SK-N-SH (cell line): ENCODE measurements at regions of chr9 and their contacts with region 1.

Region 1: DNA sequence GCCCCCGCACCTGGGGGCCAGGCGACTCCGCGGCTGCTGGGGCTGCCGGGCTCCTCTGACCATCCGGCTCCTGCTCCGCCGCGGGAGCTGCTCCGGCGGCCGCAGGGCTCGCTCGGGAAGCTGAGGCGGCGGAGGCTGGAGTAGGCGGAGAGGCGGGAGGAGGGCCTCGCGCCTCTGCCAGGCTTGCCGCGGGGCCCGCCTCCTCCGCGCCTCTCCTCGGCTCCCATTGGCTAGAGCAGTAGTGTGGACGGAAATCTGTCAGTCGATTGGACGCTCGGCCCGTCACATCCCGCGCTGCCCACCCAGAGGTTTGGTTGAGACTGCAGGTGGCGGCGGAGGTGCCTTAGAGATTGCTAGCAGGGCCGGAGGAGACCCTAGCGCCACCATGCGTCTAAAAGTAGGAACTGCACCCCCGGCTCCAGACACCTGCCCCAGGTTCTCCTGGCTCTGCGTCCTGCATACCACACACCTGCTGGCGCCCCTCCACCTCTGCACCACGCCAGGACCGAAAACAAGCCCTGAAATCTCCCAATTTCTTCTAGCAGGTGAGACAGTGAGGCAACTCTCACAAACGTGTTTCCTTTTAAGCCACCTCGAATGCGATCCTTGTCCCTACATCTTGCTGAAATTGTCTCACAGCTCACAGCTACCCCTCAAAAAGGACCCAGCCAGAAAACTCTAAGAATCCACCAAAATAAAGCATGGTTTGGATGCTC is at the start of gene SCAI:
- DNase-seq: peak; percentile 98
- H3K4me3 ChIP-seq: peak within 1 kb of the TSS; percentile 64 to 74
- H3K27ac ChIP-seq: peak within 1 kb of the TSS in 1 of 2 experiments; percentile 65; a peak in 2 of 4 replicates
- H3K4me1 ChIP-seq: peaks cover 0 to 5% of the 10 kb centered on the region in 2 experiments; a peak in 2 of 4 replicates
- H3K27me3 ChIP-seq: no peaks in the 10 kb centered on the region
- CTCF ChIP-seq: peak; percentile 97
- EP300 ChIP-seq: no peak; a peak in 1 of 4 replicates
- RAD21 ChIP-seq: peak; percentile 87
- polyA plus RNA-seq, gene SCAI: 0.85 and 1.2 TPM in 2 replicates

Region 2: GRCh38 chr9:124975131-124975530 is 168.4 kb before region 1 on chr9:
- CTCF ChIA-PET with region 1: no interaction called
- POLR2A ChIA-PET with region 1: no interaction called
- DNase-seq: no peak
- H3K4me3 ChIP-seq: no peak overlapping the region
- H3K27ac ChIP-seq: no peak overlapping the region
- H3K4me1 ChIP-seq: no peaks in the 10 kb centered on the region
- H3K27me3 ChIP-seq: no peaks in the 10 kb centered on the region
- CTCF ChIP-seq: no peak
- EP300 ChIP-seq: no peak
- RAD21 ChIP-seq: no peak

Region 3: GRCh38 chr9:125066839-125067619 is 76.5 kb before region 1 on chr9:
- CTCF ChIA-PET with region 1: no interaction called
- POLR2A ChIA-PET with region 1: no interaction called
- DNase-seq: no peak
- H3K4me3 ChIP-seq: no peak overlapping the region
- H3K27ac ChIP-seq: peak overlapping the region in 1 of 2 experiments; percentile 33; a peak in 1 of 4 replicates
- H3K4me1 ChIP-seq: peaks cover 0 to 3% of the 10 kb centered on the region in 2 experiments; a peak in 2 of 4 replicates
- H3K27me3 ChIP-seq: no peaks in the 10 kb centered on the region
- CTCF ChIP-seq: no peak
- EP300 ChIP-seq: no peak
- RAD21 ChIP-seq: no peak

Region 4: DNA sequence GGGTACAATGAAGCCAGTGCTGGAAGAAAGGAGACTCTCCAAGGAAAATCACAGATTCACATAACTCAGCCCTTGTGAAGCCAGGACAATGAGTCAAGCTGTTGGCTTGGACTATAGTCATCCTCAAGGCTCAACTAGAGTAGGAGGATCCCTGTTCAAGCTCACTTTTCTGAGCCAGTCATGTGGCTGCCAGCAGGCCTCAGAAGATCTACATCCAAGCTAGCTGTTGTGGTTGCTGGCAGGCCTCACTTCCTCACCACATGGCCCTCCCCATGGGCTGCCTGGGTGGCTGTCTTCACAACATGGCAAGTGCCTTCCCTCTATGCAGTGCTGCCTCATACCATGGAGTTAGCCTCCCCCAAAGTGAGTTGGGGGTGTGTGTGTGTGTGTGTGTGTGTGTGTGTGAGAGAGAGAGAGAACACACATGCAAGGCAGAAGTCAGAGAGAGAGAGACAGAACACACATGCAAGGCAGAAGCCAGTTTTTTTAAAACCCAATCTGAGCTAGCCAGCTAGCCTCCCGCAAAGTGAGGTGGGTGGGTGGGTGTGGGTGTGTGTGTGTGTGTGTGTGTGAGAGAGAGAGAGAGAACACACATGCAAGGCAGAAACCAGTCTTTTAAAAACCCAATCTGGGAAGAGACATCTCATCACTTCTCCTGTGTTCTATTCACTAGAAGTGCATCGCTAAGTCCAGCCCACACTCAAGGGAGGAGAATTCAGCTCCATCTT is 17.4 kb before region 1 on chr9:
- CTCF ChIA-PET with region 1: interaction called, 17 read pairs
- POLR2A ChIA-PET with region 1: interaction called, 4 read pairs
- DNase-seq: peak; percentile 56
- H3K4me3 ChIP-seq: no peak overlapping the region
- H3K27ac ChIP-seq: peak overlapping the region; percentile 48 to 76
- H3K4me1 ChIP-seq: peaks cover 6 to 12% of the 10 kb centered on the region in 2 experiments; a peak in 3 of 4 replicates
- H3K27me3 ChIP-seq: no peaks in the 10 kb centered on the region
- CTCF ChIP-seq: no peak
- EP300 ChIP-seq: peak in 1 of 2 experiments; percentile 68; a peak in 1 of 4 replicates
- RAD21 ChIP-seq: no peak